Transverse colon (tissue), 4 donors: ENCODE measurements at regions of chr12 and their contacts with region 1.

Region 1: DNA sequence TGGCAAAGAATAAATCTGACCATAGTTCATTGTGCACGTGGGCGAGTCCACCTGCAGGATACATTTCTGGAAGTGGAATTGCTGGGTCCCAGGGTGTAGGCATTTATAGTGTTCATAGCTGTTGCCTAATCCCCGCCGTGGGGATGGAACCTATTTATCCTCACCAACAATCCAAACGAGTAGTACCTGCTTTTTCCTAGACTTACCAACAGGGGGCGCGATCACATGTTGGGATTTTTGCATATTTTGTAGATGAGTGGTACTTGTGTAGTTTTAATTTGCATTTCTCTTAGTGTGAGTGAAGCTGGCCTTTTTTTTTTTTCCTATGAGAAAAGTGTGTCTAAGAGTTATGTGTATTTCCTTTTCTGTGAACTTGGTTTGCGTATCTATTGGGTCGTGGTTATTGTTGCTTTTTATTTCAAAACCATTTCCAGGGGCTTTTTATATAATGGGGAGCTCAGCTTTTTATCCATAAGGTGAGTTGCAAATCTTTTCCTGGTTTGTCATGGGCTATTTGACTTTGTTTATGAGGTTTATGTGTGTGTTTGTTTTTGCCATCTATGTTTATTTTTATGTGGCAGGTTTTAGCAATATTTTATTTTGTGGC is 67.2 kb downstream of the CCDC92 start:
- DNase-seq: peak; percentile 62
- H3K4me3 ChIP-seq: no peak overlapping the region
- H3K27ac ChIP-seq: no peak overlapping the region
- H3K4me1 ChIP-seq: peaks cover 0 to 2% (median 0%) of the 10 kb centered on the region in 4 donors
- H3K27me3 ChIP-seq: no peaks in the 10 kb centered on the region
- CTCF ChIP-seq: peak; percentile 76 to 81 (median 78)
- EP300 ChIP-seq: no peak
- POLR2A ChIP-seq: no peak

Region 2: GRCh38 chr12:123690191-123690840 is 215.1 kb before region 1 on chr12:
- in situ Hi-C with region 1: no loop called
- intact Hi-C with region 1: no loop called
- DNase-seq: no peak
- H3K4me3 ChIP-seq: no peak overlapping the region
- H3K27ac ChIP-seq: no peak overlapping the region
- H3K4me1 ChIP-seq: no peaks in the 10 kb centered on the region
- H3K27me3 ChIP-seq: no peaks in the 10 kb centered on the region
- CTCF ChIP-seq: no peak
- EP300 ChIP-seq: no peak
- POLR2A ChIP-seq: no peak

Region 3: GRCh38 chr12:123919980-123920360 is 14.5 kb after region 1 on chr12:
- in situ Hi-C with region 1: no loop called
- intact Hi-C with region 1: loop called (anchors 1 kb)
- DNase-seq: no peak
- H3K4me3 ChIP-seq: no peak overlapping the region
- H3K27ac ChIP-seq: no peak overlapping the region
- H3K4me1 ChIP-seq: peaks cover 0 to 7% (median 3%) of the 10 kb centered on the region in 4 donors
- H3K27me3 ChIP-seq: peaks cover 7% of the 10 kb centered on the region
- CTCF ChIP-seq: no peak
- EP300 ChIP-seq: no peak
- POLR2A ChIP-seq: no peak

Region 4: DNA sequence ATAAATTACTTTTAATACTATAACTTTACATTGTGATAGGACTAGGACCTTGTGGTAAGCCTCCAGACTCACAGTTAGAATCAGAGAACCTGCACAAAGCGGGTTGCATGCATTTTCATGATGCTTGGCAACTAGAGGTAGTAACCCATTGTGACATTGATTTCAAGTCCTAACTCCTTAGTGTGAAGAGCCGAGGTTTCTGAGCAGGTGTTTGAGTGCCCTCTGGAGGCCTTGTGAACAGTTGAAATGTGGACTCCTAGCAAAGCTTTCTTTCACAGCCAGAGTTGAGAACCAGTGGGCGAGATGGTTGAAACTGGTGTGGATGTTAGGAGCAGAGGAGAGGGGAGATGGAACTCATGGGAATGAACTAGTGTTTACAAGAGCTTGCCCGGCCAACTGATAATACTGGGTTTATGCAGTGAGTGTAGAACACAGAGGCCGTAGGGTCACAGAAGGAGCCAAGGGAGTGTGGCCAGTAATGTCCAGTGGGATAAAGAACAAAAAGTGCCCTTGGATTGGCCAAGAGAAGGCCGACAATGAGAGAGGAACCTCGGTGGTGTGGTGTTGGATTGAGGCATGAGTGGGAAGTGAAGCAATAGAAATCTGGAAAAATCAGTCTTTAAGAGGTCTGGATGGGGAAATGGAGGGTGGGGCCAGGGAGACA is 78.5 kb after region 1 on chr12:
- in situ Hi-C with region 1: loop called in 3 of 4 experiments (anchors 10 kb)
- intact Hi-C with region 1: no loop called
- DNase-seq: peak; percentile 40
- H3K4me3 ChIP-seq: no peak overlapping the region
- H3K27ac ChIP-seq: no peak overlapping the region
- H3K4me1 ChIP-seq: peaks cover 0 to 16% (median 0%) of the 10 kb centered on the region in 4 donors
- H3K27me3 ChIP-seq: no peaks in the 10 kb centered on the region
- CTCF ChIP-seq: peak; percentile 0 to 66 (median 49)
- EP300 ChIP-seq: no peak
- POLR2A ChIP-seq: no peak